ENCODE measurements at regions of chr10 and their contacts with region 1.

Region 1: DNA sequence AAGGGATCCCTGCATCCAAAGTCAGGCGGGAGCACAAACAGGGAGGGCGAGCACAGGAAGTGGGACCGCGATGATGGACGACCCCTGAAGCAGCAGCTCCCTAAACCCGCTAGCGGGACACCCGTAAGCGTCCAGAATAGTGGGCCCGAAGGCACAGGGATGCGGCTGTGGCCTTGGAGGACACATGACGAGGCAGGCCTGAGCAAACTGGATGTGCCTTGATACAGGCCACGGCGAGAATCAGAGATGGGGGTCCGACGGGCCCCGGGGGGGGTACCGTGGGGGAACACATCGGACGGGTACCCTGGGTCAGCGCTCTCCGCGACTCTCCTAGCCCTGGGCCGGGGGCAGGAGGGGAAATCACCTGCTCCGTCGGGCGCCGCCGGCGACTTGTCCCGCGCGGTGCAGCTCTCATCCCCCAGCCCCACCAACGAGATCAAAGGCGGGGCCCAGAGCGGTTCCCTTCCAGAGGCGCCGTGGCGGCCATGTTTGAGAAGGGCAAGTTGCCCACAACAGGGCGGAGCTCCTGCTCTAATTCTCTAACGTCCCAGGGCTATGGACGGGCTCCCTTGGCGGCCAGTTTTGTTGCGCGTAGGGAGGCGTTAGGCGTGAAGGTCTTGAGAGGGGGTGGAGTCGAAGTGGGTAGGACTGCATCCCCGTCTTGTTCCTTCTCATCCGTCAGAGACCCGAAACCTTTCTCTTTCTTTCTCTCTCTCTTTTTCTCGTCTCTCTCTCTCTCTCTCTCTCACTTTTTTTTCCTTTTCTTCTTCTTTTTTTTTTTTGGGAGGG is at the start of gene CUEDC2:
- DNase-seq: peak; percentile 97
- H3K4me3 Mint-ChIP-seq: peak within 1 kb of the TSS; percentile 90
- H3K27ac Mint-ChIP-seq: peak within 1 kb of the TSS; percentile 94
- H3K4me1 Mint-ChIP-seq: peaks cover 26% of the 10 kb centered on the region
- H3K27me3 Mint-ChIP-seq: no peaks in the 10 kb centered on the region
- CTCF ChIP-seq: no peak
- total RNA-seq, gene CUEDC2: 55.0 and 64.5 TPM in 2 replicates

Region 2: GRCh38 chr10:101961591-101962498 is 470.5 kb before region 1 on chr10:
- CTCF ChIA-PET with region 1: no interaction called
- POLR2A ChIA-PET with region 1: no interaction called
- intact Hi-C with region 1: no loop called
- DNase-seq: peak; percentile 18
- H3K4me3 Mint-ChIP-seq: no peak overlapping the region
- H3K27ac Mint-ChIP-seq: no peak overlapping the region
- H3K4me1 Mint-ChIP-seq: no peaks in the 10 kb centered on the region
- H3K27me3 Mint-ChIP-seq: no peaks in the 10 kb centered on the region
- CTCF ChIP-seq: no peak

Region 3: GRCh38 chr10:102461187-102462054 is 29.1 kb after region 1 on chr10:
- CTCF ChIA-PET with region 1: no interaction called
- POLR2A ChIA-PET with region 1: interaction called, 24 read pairs
- intact Hi-C with region 1: no loop called
- DNase-seq: peak; percentile 95
- H3K4me3 Mint-ChIP-seq: peak overlapping the region; percentile 92
- H3K27ac Mint-ChIP-seq: peak overlapping the region; percentile 63
- H3K4me1 Mint-ChIP-seq: peaks cover 15% of the 10 kb centered on the region
- H3K27me3 Mint-ChIP-seq: no peaks in the 10 kb centered on the region
- CTCF ChIP-seq: no peak

Measured in MCF 10A (cell line).